ENCODE measurements at regions of chr12 and their contacts with region 1.

Region 1: DNA sequence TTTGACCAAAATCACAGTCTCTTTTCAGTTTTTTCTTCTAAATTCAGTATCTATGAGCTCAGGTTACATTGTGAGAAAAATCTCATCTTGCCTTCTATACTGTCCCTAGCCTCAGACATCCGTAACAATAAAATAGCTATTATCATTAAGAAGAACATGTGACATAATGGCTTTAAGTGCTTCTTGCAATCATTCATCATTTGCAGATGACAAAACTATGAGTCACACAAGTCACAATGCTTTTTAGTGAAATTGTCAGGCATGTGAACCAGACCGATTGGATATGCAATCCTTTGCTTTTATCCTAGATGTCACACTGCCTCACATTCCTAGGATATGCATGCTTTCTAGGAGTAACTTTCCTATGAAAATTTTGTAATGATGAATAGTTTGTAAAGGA is 313.1 kb downstream of the SLC6A15 start:
- DNase-seq: no peak
- H3K4me3 Mint-ChIP-seq: no peak overlapping the region
- H3K27ac Mint-ChIP-seq: no peak overlapping the region
- H3K4me1 Mint-ChIP-seq: no peaks in the 10 kb centered on the region
- H3K27me3 Mint-ChIP-seq: no peaks in the 10 kb centered on the region

Region 2: GRCh38 chr12:84572186-84572585 is 27.4 kb before region 1 on chr12:
- CTCF ChIA-PET with region 1: no interaction called
- intact Hi-C with region 1: loop called (anchors 1 kb)
- DNase-seq: no peak
- H3K4me3 Mint-ChIP-seq: no peak overlapping the region
- H3K27ac Mint-ChIP-seq: no peak overlapping the region
- H3K4me1 Mint-ChIP-seq: no peaks in the 10 kb centered on the region
- H3K27me3 Mint-ChIP-seq: no peaks in the 10 kb centered on the region

Region 3: DNA sequence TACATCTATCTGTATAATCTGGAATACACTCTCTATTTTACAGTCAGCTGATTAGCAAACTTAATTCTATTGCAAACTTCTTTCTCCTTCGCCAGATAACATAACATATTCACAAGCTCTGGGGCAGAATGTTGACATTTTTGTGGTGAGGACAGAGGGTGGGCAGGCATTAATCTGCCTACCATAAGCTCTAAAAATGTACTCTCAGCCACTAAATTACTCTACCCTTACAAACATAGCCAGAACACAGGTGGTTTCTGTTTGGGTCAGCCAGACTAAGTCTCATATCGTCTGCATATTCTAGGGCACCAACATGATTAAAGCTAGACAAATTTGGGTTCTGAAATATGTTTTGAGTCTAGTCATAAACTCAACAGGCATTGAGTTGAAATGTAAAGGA is 223.0 kb after region 1 on chr12:
- CTCF ChIA-PET with region 1: no interaction called
- intact Hi-C with region 1: no loop called
- DNase-seq: no peak
- H3K4me3 Mint-ChIP-seq: no peak overlapping the region
- H3K27ac Mint-ChIP-seq: no peak overlapping the region
- H3K4me1 Mint-ChIP-seq: no peaks in the 10 kb centered on the region
- H3K27me3 Mint-ChIP-seq: peaks cover 8% of the 10 kb centered on the region